H1 (cell line): ENCODE measurements at regions of chr5 and their contacts with region 1.

Region 1: GRCh38 chr5:95781101-95781583 is 41.4 kb downstream of the GLRX start:
- DNase-seq: peak; percentile 44 to 73
- H3K4me3 ChIP-seq: no peak overlapping the region
- H3K27ac ChIP-seq: no peak overlapping the region
- H3K4me1 ChIP-seq: no peaks in the 10 kb centered on the region
- H3K27me3 ChIP-seq: no peaks in the 10 kb centered on the region
- CTCF ChIP-seq: peak; percentile 69 to 94 (median 84)
- EP300 ChIP-seq: no peak
- POLR2A ChIP-seq: no peak
- RAD21 ChIP-seq: peak; percentile 95 to 96

Region 2: DNA sequence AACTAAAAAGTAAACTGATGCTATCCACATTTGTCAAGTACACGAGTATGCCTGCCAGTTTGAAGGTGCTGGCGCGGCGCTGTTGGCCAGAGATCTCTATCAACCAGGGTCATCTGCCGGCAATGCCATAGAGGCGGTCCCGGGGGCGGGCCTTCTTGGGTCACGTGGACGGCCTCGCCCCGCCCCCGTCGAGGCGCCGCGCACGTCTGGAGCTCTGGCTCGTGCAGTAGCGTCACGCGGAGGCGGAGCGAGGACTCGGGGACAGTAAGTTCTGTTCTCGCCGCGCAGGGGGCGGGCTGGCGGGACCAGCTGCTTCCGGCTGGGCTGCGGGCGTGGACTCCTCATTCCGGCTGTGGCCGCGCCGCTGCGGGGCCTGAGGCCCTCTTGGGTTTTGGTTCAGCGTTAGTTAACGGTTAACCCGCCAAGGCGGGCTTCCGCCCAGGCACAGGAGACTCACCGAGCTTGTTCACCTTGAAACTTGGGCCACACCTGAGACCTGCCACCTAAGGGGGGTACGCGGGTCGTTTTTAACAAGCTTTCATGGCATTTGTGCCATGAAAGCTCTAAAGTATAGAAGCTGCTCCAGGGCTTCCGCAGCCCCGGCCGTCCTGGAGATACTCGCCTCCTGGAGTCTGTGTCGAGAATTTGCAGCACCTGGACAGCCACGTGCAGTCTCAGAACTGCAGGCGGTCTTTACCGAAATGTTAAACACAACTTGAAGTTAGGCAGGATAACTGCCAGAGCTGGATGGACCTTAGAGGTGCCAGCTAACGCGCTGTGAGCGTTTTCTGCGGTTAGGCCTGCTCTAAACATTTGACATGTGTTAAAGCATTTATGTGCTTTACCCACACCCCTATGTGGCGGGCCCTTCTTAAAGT is 134.3 kb before region 1 on chr5 and contains the start of gene RFESD:
- CTCF ChIA-PET with region 1: interaction called, 32 read pairs
- POLR2A ChIA-PET with region 1: no interaction called
- DNase-seq: peak; percentile 92 to 97
- H3K4me3 ChIP-seq: peak within 1 kb of the TSS; percentile 47 to 63 (median 56)
- H3K27ac ChIP-seq: peak within 1 kb of the TSS; percentile 20; the same call in 1 of the 2 replicates
- H3K4me1 ChIP-seq: peaks cover 0 to 6% (median 3%) of the 10 kb centered on the region in 4 experiments; a peak in 2 of 7 replicates
- H3K27me3 ChIP-seq: no peaks in the 10 kb centered on the region
- CTCF ChIP-seq: peak in 2 of 3 experiments; percentile 7 to 9; a peak in 2 of 4 replicates
- EP300 ChIP-seq: peak in 1 of 2 experiments; percentile 48; a peak in 1 of 3 replicates
- POLR2A ChIP-seq: peak in 1 of 2 experiments; percentile 81; a peak in 2 of 3 replicates
- RAD21 ChIP-seq: peak in 1 of 2 experiments; percentile 26; a peak in 1 of 4 replicates
- total RNA-seq, gene RFESD: 2.0 and 4.3 TPM in 2 replicates

Region 3: DNA sequence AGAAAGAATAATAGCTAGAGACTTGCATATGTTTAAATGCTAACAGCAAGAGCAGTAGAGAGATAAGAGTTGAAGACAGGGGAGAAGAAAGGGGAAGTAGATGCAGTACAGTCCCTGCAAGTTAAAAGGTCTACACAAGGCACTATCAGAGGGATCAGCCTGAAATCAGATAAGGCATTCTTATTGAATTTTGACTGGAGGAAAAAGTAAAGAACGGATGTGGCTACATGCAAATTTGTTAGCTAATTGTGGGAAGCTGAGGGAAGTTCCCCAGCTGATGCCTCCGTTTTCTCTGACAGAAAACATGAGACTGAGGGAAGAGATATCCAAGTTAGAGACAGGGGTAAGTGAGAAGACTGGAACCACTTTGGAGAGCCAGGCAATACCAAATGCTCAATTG is 62.9 kb before region 1 on chr5:
- CTCF ChIA-PET with region 1: no interaction called
- POLR2A ChIA-PET with region 1: no interaction called
- DNase-seq: no peak
- H3K4me3 ChIP-seq: no peak overlapping the region
- H3K27ac ChIP-seq: no peak overlapping the region
- H3K4me1 ChIP-seq: no peaks in the 10 kb centered on the region
- H3K27me3 ChIP-seq: no peaks in the 10 kb centered on the region
- CTCF ChIP-seq: no peak
- EP300 ChIP-seq: no peak
- POLR2A ChIP-seq: no peak
- RAD21 ChIP-seq: no peak

Region 4: GRCh38 chr5:95793610-95794009 is 12.5 kb after region 1 on chr5:
- CTCF ChIA-PET with region 1: interaction called, 29 read pairs
- POLR2A ChIA-PET with region 1: no interaction called
- DNase-seq: no peak
- H3K4me3 ChIP-seq: no peak overlapping the region
- H3K27ac ChIP-seq: no peak overlapping the region
- H3K4me1 ChIP-seq: no peaks in the 10 kb centered on the region
- H3K27me3 ChIP-seq: no peaks in the 10 kb centered on the region
- CTCF ChIP-seq: no peak
- EP300 ChIP-seq: no peak
- POLR2A ChIP-seq: no peak
- RAD21 ChIP-seq: no peak

Region 5: DNA sequence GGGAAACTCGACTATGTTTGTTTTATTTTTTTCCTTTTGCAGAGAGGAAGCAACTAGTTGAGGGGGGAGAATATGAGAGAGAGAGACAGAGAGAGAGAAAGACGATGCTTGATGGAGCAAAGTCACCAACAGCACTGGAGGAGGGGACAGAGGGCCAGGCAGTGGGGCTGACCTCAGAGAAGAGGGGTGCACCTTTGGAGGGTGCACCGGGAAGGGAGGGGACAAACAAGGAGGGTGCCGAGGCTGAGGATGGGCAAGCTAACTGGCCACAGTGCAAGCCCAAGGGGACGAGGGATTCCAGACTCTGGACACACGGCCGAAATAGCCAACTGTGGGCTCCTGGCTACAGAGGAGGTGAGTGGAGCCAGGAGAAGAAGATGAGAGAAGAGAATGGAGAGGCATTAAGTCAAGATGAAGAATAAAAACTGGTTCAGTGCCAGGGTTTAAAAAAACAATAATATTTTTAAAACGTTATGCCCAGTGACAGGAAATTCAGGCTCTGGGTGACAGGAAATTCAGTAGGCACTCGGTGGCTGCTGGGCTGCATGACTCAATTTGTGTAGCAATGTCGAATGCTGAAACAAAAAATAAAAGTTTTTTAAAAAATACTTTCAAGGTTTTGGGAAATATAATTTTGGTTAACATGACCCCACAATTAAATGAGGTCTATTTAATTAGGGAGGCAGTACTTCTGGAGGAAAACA is 54.7 kb after region 1 on chr5:
- CTCF ChIA-PET with region 1: interaction called, 24 read pairs
- POLR2A ChIA-PET with region 1: no interaction called
- DNase-seq: no peak
- H3K4me3 ChIP-seq: no peak overlapping the region
- H3K27ac ChIP-seq: no peak overlapping the region
- H3K4me1 ChIP-seq: peaks cover 0 to 3% (median 0%) of the 10 kb centered on the region in 4 experiments; a peak in 2 of 7 replicates
- H3K27me3 ChIP-seq: no peaks in the 10 kb centered on the region
- CTCF ChIP-seq: no peak
- EP300 ChIP-seq: no peak
- POLR2A ChIP-seq: no peak
- RAD21 ChIP-seq: no peak

Region 6: GRCh38 chr5:95853490-95853889 is 72.3 kb after region 1 on chr5:
- CTCF ChIA-PET with region 1: interaction called, 120 read pairs
- POLR2A ChIA-PET with region 1: no interaction called
- DNase-seq: no peak
- H3K4me3 ChIP-seq: no peak overlapping the region
- H3K27ac ChIP-seq: no peak overlapping the region
- H3K4me1 ChIP-seq: no peaks in the 10 kb centered on the region; a peak in 1 of 7 replicates
- H3K27me3 ChIP-seq: no peaks in the 10 kb centered on the region
- CTCF ChIP-seq: no peak
- EP300 ChIP-seq: no peak
- POLR2A ChIP-seq: no peak
- RAD21 ChIP-seq: no peak

Region 7: DNA sequence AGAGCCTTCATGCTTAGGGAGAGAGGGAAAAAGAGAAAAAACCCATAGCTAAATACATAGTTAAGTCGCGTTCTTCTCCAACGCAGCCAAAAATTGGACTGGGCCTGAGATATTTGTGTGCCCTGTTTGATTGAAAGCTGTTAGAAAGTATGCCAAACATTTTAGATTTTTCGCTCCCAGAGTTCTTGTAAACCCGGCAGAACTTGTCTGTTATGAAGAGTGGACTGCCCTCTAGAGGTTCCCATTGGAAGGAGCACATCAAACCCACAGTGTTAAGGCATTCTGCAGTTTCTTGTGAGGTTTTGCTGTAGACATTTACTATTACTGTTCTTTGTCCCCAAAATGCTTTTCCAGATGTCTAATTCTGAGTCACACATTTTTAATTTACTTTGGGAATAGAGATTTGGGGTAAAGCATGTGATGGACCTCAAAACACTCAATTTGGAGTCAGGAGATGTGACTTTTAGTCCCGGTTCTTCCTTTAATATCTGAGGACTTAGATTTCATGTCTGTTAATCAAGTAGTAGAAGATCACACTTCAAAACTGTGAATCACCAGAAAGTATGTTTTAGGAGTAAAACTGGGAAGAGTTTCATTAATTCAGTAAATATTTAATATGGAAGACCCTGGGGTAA is 555.3 kb after region 1 on chr5:
- CTCF ChIA-PET with region 1: interaction called, 15 read pairs
- POLR2A ChIA-PET with region 1: no interaction called
- DNase-seq: peak; percentile 36 to 62
- H3K4me3 ChIP-seq: peak overlapping the region in 1 of 4 experiments; percentile 19; a peak in 1 of 8 replicates
- H3K27ac ChIP-seq: no peak overlapping the region
- H3K4me1 ChIP-seq: no peaks in the 10 kb centered on the region; a peak in 1 of 7 replicates
- H3K27me3 ChIP-seq: no peaks in the 10 kb centered on the region
- CTCF ChIP-seq: peak in 2 of 3 experiments; percentile 78 to 84; a peak in 3 of 4 replicates
- EP300 ChIP-seq: no peak
- POLR2A ChIP-seq: no peak
- RAD21 ChIP-seq: peak; percentile 96 to 98